Activated CD8-positive, alpha-beta memory T cell treated with anti-CD3 and anti-CD28 coated beads, Interleukin-2, amount 10 ng/mL, durations not matched to agents 7 days and 5 days (primary cell): ENCODE measurements at regions of chr1 and their contacts with region 1.

Region 1: GRCh38 chr1:20696397-20697329 is 21.1 kb downstream of the KIF17 start:
- DNase-seq: peak; percentile 83
- ATAC-seq: peak; percentile 96
- H3K4me3 Mint-ChIP-seq: peak overlapping the region; percentile 79
- H3K27ac Mint-ChIP-seq: peak overlapping the region; percentile 62
- H3K4me1 Mint-ChIP-seq: peaks cover 6% of the 10 kb centered on the region
- H3K27me3 Mint-ChIP-seq: peaks cover 13% of the 10 kb centered on the region

Region 2: DNA sequence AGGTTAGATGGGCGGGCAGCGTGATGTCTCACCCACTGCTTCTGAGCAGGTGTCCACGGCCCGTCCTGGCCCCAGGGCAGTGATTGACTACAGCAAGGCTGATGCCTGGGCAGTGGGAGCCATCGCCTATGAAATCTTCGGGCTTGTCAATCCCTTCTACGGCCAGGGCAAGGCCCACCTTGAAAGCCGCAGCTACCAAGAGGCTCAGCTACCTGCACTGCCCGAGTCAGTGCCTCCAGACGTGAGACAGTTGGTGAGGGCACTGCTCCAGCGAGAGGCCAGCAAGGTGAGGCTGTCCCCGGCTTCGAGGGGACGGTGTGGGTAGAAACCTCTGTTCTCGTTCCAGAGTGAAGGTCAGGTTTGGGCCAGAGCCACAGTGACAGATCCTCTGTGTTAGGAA is 47.7 kb before region 1 on chr1:
- CTCF ChIA-PET with region 1: interaction called, 12 read pairs
- DNase-seq: no peak
- ATAC-seq: no peak
- H3K4me3 Mint-ChIP-seq: no peak overlapping the region
- H3K27ac Mint-ChIP-seq: no peak overlapping the region
- H3K4me1 Mint-ChIP-seq: no peaks in the 10 kb centered on the region
- H3K27me3 Mint-ChIP-seq: no peaks in the 10 kb centered on the region

Region 3: DNA sequence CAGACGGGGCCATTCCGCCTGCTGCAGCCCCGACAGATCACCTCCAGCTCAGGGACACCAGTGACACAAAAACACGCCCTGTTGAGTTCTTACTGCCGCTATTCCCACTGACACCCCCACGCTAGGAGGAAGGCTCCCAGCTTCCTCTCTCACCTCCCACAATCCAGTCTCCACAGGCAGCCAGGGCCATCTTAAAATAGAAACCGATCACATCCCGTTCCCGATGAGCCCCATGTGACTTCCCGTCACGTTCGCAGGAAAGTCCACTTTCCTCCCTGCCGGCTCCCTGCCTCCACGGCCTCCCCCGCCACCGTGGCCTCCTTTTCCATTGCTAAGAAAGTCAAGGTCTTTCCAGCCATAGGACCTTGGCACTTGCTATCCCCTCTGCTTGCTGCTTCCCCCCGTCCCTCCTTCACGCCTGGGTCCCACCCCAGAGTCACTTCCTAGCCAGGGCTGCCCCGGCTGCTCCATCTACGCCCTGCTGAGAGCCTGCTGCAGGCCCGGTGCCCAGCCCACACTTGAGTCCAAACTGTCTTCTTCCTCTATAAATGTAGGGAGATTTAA is 11.5 kb before region 1 on chr1:
- CTCF ChIA-PET with region 1: interaction called, 16 read pairs
- DNase-seq: no peak
- ATAC-seq: no peak
- H3K4me3 Mint-ChIP-seq: no peak overlapping the region
- H3K27ac Mint-ChIP-seq: no peak overlapping the region
- H3K4me1 Mint-ChIP-seq: peaks cover 4% of the 10 kb centered on the region
- H3K27me3 Mint-ChIP-seq: peaks cover 32% of the 10 kb centered on the region

Region 4: DNA sequence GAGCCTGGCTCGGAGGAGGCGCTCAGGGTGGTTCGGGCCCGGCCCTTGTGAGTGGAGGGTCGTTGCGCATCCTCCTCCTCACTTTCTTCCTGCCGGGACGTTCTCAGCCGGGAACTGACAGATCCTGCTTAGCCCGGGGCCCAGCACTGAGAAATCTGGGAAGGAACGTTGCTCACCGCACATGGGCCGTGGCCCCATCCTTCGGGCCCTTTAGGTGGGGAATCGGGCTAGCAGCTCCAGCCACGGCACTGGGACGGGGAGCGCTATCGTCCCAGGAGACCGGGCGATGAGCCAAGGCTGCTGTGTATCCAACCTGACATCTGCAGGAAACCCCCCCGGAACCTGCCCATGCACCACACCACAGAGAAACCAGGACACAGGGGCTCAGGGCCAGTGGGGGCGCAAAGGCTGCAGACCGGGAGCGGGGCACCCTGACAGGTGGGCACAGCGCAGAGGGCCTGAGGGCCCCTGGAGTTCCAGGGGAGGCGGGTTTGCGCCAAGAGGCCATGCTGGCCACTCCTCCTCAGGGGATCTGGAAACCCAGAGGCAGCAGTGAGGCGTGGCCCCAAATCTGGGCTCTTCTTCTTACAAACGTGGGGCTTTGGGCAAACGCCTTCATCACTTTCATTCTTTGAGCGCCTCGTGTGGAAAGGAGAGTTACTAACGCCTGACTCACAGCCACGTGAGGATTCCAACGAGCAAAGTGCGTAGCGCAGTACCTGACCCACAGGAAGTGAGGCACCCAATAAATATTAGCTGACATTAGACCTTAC is 36.1 kb after region 1 on chr1 and contains the start of gene SH2D5:
- CTCF ChIA-PET with region 1: interaction called, 22 read pairs
- DNase-seq: peak; percentile 84
- ATAC-seq: peak; percentile 74
- H3K4me3 Mint-ChIP-seq: peak within 1 kb of the TSS; percentile 79
- H3K27ac Mint-ChIP-seq: no peak within 1 kb of the TSS
- H3K4me1 Mint-ChIP-seq: peaks cover 20% of the 10 kb centered on the region
- H3K27me3 Mint-ChIP-seq: peaks cover 43% of the 10 kb centered on the region
- total RNA-seq, gene SH2D5: not detected

Region 5: DNA sequence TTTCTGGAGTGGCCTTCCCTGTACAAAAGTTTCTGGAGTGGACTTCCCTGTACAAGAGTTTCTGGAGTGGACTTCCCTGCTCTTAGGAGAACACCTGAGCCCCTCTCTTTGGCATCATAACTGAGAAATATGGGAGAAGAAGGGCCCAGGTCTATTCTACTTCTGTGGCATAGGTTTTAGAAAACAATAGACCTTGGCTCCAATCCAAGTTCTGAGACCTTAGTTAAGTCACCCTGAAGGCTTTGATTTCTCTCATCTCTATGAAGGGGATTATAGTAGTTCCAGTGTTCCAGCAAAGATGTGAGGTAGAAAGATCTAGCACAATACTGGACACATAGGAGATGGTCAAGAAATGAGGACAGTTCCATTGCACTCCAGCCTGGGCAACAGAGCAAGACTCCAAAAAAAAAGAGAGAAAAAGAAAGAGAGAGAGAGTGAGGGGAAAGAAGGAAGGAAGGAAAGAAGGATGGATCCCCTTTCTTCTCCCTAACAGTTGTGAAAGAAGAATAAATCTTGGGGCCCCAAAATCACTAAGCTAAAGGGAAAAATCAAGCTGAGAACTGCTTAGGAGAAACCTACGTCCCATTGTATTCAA is 493.3 kb after region 1 on chr1:
- CTCF ChIA-PET with region 1: interaction called, 52 read pairs
- DNase-seq: no peak
- ATAC-seq: no peak
- H3K4me3 Mint-ChIP-seq: no peak overlapping the region
- H3K27ac Mint-ChIP-seq: no peak overlapping the region
- H3K4me1 Mint-ChIP-seq: peaks cover 4% of the 10 kb centered on the region
- H3K27me3 Mint-ChIP-seq: peaks cover 29% of the 10 kb centered on the region

Region 6: DNA sequence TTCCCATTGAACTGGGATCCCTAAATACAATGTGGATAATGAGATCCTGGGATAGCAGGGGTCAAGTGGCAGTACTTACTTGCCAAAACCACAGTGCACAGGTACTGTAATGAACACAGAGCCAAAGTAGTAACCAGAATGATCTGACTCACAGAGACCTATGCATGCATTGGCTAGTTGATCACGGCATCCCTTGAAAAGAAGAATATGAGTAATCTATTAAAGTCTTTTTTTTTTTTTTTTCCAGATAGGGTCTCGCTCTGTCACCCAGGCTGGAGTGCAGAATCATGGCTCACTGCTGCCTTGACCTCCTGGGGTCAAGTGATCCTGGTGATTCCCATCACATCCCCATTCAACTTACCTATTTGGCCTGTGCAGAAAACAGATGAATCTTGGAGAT is 509.5 kb after region 1 on chr1:
- CTCF ChIA-PET with region 1: interaction called, 10 read pairs
- DNase-seq: no peak
- ATAC-seq: peak; percentile 55
- H3K4me3 Mint-ChIP-seq: no peak overlapping the region
- H3K27ac Mint-ChIP-seq: no peak overlapping the region
- H3K4me1 Mint-ChIP-seq: peaks cover 14% of the 10 kb centered on the region
- H3K27me3 Mint-ChIP-seq: no peaks in the 10 kb centered on the region